Right cardiac atrium (tissue), 5 donors: ENCODE measurements at regions of chr2 and their contacts with region 1.

Region 1: DNA sequence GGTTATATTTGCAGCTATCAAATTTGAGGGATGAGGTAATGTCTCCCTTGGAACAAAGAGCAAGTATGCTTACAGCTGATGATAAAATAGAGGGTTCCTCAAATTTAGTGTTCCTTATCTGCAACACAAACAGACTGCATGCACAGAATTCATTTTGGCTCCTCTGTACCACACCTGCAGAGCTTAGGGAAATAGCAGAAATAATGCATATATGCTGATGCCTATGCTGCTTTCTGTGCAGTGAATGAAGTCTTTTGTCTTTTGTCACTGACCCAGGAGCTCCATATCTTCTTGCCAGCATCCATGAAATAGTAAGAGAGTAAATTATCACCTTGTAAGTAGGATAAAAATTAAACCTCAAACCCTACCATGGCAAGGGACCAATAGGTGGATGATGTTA is 69.8 kb downstream of the NCKAP1 start:
- DNase-seq: no peak
- ATAC-seq: no peak
- H3K4me3 ChIP-seq: no peak overlapping the region
- H3K27ac ChIP-seq: no peak overlapping the region
- H3K4me1 ChIP-seq: no peaks in the 10 kb centered on the region
- H3K27me3 ChIP-seq: no peaks in the 10 kb centered on the region

Region 2: DNA sequence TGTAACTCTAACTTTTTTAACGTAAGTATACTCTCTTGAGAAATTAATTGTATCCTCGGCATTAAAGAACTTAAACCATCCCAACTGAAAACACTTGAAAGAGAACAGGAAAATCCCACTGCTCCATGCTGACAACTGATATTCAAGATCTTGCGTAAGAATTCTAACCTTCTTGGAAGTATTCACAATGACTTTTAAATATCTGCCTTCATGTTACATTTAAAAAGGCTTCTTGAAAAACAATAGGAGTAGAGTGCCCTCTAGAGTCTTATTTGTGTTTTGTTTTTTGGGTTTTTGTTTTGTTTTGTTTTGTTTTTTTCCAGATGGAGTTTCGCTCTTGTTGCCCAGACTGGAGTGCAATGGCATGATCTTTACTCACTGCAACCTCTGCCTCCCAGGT is 317.8 kb before region 1 on chr2:
- intact Hi-C with region 1: no loop called
- DNase-seq: no peak
- ATAC-seq: peak; percentile 62 to 65
- H3K4me3 ChIP-seq: no peak overlapping the region
- H3K27ac ChIP-seq: no peak overlapping the region
- H3K4me1 ChIP-seq: no peaks in the 10 kb centered on the region
- H3K27me3 ChIP-seq: no peaks in the 10 kb centered on the region

Region 3: GRCh38 chr2:182933629-182934028 is 34.9 kb before region 1 on chr2:
- intact Hi-C with region 1: loop called in 1 of 4 experiments (anchors 5 kb)
- DNase-seq: no peak
- ATAC-seq: no peak
- H3K4me3 ChIP-seq: no peak overlapping the region
- H3K27ac ChIP-seq: no peak overlapping the region
- H3K4me1 ChIP-seq: no peaks in the 10 kb centered on the region
- H3K27me3 ChIP-seq: no peaks in the 10 kb centered on the region